ENCODE measurements at regions of chr6 and their contacts with region 1.

Region 1: DNA sequence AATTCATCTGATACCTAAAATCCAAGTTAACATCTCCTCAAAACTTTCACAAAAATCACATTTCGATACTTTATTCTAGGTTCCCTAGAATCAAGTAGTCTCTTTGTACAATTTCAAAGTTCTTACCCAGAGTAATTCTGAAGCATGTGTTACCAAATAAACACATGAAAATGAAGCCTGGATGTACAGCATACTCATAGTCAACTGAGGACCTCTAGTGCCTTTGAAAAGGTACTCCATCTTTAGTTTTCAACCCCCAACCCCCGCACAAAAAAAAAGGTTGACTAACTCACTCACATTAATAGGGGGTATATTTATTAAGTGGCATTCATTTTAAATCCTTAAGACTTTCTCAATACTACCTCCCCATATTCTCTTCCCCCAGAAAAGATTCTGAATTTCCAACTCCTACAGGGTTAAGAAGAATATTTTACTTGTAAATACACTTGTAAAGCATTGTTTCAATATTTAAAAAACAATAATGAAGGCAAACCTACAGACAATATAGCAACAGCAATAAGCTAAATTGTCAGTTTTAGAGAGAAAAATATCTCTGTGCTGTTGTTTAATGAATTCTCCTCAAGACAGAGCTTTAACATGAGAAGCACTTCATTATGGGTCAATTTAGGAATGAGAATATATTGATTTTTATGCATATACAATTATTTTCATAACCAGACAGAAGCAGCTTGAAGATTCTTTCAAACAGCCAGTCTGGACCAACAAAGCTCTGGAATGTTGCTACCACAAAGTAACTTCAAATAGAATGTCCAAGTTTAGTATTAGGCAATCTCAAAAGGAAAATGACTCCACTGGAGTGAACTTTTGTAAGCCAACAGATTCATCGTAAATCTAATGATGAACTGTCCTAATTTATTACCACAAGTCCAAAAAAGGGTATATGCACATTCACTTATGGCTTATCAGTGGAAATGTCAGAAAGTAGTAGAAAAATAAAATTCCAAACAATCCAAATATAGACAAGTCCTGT is 3.3 kb downstream of the PLN start:
- DNase-seq: peak in 7 of 9 donors; percentile 23 to 62 (median 47)
- ATAC-seq: peak; percentile 88
- H3K4me3 ChIP-seq: no peak overlapping the region
- H3K4me3 Mint-ChIP-seq: peak overlapping the region in 4 of 10 donors; percentile 19 to 63 (median 35)
- H3K27ac ChIP-seq: no peak overlapping the region
- H3K27ac Mint-ChIP-seq: peak overlapping the region in 8 of 9 donors; percentile 19 to 83 (median 42)
- H3K4me1 ChIP-seq: peaks cover 0 to 4% of the 10 kb centered on the region in 2 donors
- H3K4me1 Mint-ChIP-seq: peaks cover 16 to 79% (median 63%) of the 10 kb centered on the region in 7 donors
- H3K27me3 ChIP-seq: no peaks in the 10 kb centered on the region
- H3K27me3 Mint-ChIP-seq: no peaks in the 10 kb centered on the region

Region 2: DNA sequence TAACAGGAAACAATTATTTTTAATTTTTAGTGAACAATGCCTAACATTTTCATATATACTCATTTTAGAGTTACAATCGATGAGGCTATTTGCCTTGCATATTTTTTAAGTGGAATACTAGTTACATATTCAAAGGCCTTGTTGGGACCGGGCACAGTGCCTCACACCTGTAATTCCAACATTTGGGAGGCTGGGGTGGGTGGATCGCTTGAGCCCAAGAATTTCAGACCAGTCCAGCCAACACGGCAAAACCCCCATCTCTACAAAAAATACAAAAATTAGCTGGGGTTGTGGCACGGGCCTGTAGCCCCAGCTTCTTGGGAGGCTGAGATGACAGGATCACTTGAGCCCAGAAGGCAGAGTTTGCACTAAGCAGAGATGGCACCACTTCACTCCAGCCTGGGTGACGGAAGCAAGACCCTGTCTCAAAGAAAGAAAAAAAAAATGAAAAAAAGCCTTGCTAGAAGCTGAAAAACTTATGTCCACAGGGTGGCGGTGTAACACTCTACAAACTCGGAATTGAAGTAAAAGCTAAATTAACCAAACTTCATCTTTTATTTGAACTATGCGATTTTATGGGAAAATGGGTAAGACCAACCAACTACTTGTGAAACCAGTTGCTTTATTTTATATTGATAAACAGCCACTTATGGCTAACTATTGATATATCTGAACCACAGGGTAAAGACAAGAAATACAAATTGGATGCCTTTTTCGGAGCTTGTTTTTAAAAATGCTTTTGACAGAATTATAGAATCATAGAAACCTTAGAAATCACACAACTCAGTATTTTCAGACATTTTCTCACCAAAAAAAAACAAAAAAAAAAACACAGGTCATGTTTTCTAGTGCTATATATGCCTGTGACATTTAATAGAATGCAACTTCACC is 1101.6 kb before region 1 on chr6:
- CTCF ChIA-PET with region 1: no interaction called
- POLR2A ChIA-PET with region 1: no interaction called
- intact Hi-C with region 1: loop called in 1 of 2 experiments (anchors 1 kb)
- DNase-seq: peak; percentile 25 to 72 (median 60)
- ATAC-seq: peak; percentile 72
- H3K4me3 ChIP-seq: no peak overlapping the region
- H3K4me3 Mint-ChIP-seq: no peak overlapping the region
- H3K27ac ChIP-seq: no peak overlapping the region
- H3K27ac Mint-ChIP-seq: no peak overlapping the region
- H3K4me1 ChIP-seq: no peaks in the 10 kb centered on the region
- H3K4me1 Mint-ChIP-seq: peaks cover 0 to 5% (median 0%) of the 10 kb centered on the region in 7 donors
- H3K27me3 ChIP-seq: peaks cover 0 to 3% of the 10 kb centered on the region in 2 donors
- H3K27me3 Mint-ChIP-seq: peaks cover 19 to 73% (median 42%) of the 10 kb centered on the region in 5 donors

Region 3: DNA sequence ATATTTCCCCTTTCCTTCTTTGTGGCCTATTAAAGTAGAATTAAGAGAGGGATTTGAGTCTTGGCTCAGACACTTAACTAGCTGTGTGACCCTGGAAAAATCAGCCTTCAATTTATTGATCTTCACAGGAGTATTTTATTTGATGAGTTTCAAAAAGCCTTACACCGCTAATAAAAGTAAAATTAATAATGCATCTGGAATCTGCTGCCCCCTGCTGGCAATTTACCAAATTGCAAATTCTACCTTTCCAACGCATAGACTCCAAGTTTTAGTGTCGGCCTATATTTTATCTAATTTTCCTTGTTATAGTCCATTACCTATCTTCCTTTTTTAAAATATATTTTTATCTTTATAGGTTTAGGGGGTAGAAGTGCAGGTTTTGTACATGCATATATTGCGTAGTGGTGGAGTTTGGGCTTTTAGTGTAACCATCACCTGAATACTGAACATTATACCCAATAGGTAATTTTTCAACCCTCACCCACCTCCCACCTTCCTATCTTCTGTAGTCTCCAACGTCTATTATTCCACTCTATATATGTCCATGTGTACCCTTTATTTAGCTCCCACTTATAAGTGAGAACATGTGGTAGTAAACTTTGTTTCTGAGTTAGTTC is 995.4 kb before region 1 on chr6:
- CTCF ChIA-PET with region 1: no interaction called
- POLR2A ChIA-PET with region 1: no interaction called
- intact Hi-C with region 1: loop called in 1 of 2 experiments (anchors 10 kb)
- DNase-seq: peak; percentile 20 to 62 (median 46)
- ATAC-seq: peak; percentile 60
- H3K4me3 ChIP-seq: no peak overlapping the region
- H3K4me3 Mint-ChIP-seq: no peak overlapping the region
- H3K27ac ChIP-seq: no peak overlapping the region
- H3K27ac Mint-ChIP-seq: no peak overlapping the region
- H3K4me1 ChIP-seq: peaks cover 0 to under 1% of the 10 kb centered on the region in 2 donors
- H3K4me1 Mint-ChIP-seq: peaks cover under 1 to 3% (median 2%) of the 10 kb centered on the region in 7 donors
- H3K27me3 ChIP-seq: no peaks in the 10 kb centered on the region
- H3K27me3 Mint-ChIP-seq: peaks cover 0 to 2% (median 0%) of the 10 kb centered on the region in 5 donors

Region 4: DNA sequence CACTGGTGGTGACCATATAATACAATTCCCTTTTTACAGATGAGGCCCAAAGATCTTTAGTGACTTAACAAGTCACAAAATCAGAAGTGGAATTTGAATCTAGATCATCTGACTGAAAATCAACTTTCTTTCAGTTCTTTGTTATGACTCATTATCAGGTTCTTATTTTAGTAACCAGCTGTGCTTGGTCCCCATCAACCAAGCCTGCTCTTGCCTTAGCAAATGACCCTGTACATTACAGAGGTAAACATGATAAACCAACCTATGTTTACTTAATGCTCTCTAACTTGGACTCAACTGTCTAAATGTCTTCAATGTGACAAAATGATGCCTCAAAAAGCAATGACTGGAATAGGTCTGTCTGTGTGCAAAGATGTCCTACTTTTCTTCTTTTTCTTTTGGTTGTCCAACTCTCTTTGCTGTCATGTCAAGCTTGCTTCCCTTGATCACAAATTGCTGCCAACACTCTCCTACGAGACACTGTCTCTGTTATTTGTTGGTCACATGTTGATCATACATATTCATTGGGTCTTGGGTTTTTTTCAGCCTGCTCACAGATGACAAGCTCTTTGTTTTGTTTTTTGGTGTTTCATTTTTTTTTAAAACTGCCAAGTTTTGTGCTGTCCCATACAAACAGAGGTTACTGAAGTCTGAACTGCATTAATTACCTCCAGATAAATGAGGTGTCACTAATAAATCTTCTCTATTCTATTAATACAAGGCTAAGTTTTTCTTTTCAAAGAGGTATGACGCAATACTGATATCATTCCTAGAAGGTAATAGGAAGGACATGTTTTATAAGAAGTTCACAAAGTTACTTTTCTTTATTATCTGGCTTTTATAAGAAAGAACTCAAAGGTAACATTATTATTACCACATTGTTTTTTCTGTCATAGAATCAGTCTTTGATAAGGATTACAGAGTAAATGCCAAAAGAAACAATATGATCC is 65.5 kb before region 1 on chr6:
- CTCF ChIA-PET with region 1: interaction called, 3 read pairs
- POLR2A ChIA-PET with region 1: interaction called, 4 read pairs
- intact Hi-C with region 1: loop called in 1 of 2 experiments (anchors 1 kb)
- DNase-seq: no peak
- ATAC-seq: no peak
- H3K4me3 ChIP-seq: no peak overlapping the region
- H3K4me3 Mint-ChIP-seq: no peak overlapping the region
- H3K27ac ChIP-seq: no peak overlapping the region
- H3K27ac Mint-ChIP-seq: peak overlapping the region in 3 of 9 donors; percentile 4 to 25 (median 17)
- H3K4me1 ChIP-seq: no peaks in the 10 kb centered on the region
- H3K4me1 Mint-ChIP-seq: peaks cover 0 to 14% (median 4%) of the 10 kb centered on the region in 7 donors
- H3K27me3 ChIP-seq: no peaks in the 10 kb centered on the region
- H3K27me3 Mint-ChIP-seq: no peaks in the 10 kb centered on the region

Region 5: GRCh38 chr6:118501765-118502164 is 49.6 kb before region 1 on chr6:
- CTCF ChIA-PET with region 1: no interaction called
- POLR2A ChIA-PET with region 1: no interaction called
- intact Hi-C with region 1: no loop called
- DNase-seq: no peak
- ATAC-seq: no peak
- H3K4me3 ChIP-seq: no peak overlapping the region
- H3K4me3 Mint-ChIP-seq: no peak overlapping the region
- H3K27ac ChIP-seq: no peak overlapping the region
- H3K27ac Mint-ChIP-seq: peak overlapping the region in 1 of 9 donors; percentile 40
- H3K4me1 ChIP-seq: no peaks in the 10 kb centered on the region
- H3K4me1 Mint-ChIP-seq: peaks cover 6 to 41% (median 18%) of the 10 kb centered on the region in 7 donors
- H3K27me3 ChIP-seq: no peaks in the 10 kb centered on the region
- H3K27me3 Mint-ChIP-seq: no peaks in the 10 kb centered on the region

Region 6: DNA sequence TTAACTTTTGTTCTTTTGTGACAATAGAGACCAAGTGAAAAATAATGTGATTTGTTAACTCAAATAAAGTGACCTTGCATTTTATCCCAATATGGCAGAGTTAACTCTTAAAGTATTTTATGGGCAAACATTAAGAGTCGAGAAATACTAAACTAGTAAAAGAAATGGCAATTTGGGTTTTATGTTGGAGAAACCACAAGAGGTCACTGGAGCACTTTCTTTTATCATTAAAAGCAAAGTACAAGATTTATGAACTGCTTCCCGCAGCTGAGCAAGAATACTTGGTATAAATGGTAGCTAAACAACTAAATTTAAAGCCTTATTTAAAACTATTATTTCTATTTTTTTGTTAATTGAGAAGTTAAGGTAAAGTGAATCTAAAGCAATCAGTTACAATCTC is 417.1 kb after region 1 on chr6:
- CTCF ChIA-PET with region 1: no interaction called
- POLR2A ChIA-PET with region 1: no interaction called
- intact Hi-C with region 1: no loop called
- DNase-seq: peak in 6 of 9 donors; percentile 8 to 35 (median 24)
- ATAC-seq: no peak
- H3K4me3 ChIP-seq: no peak overlapping the region
- H3K4me3 Mint-ChIP-seq: no peak overlapping the region
- H3K27ac ChIP-seq: no peak overlapping the region
- H3K27ac Mint-ChIP-seq: no peak overlapping the region
- H3K4me1 ChIP-seq: no peaks in the 10 kb centered on the region
- H3K4me1 Mint-ChIP-seq: peaks cover 0 to 4% (median 0%) of the 10 kb centered on the region in 7 donors
- H3K27me3 ChIP-seq: no peaks in the 10 kb centered on the region
- H3K27me3 Mint-ChIP-seq: no peaks in the 10 kb centered on the region